Activated B cell treated with CpG ODN at 0.5 μM for 24 hours (primary cell): ENCODE measurements at regions of chr9 and their contacts with region 1.

Region 1: DNA sequence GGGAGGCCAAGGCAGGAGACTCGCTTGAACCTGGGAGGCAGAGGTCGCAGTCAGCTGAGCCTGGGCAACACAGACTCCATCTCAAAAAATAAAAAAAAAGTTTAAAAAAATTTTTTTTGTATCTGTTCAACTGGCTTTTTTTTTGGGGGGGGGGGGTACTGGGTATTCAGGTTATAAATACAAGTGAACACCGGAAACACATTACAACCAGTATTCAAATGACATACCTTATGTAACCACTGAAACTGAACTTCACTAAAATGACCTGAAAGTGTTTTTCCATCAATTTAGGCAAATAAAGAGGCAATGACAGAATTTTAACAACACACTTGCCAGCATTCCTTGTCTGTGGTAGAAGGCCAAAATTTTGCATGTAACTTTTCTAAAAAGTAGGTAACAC is 33.5 kb downstream of the STRBP start:
- DNase-seq: no peak
- ATAC-seq: peak; percentile 42
- H3K4me3 Mint-ChIP-seq: peak overlapping the region; percentile 69
- H3K27ac Mint-ChIP-seq: peak overlapping the region; percentile 94
- H3K4me1 Mint-ChIP-seq: peaks cover 49% of the 10 kb centered on the region
- H3K27me3 Mint-ChIP-seq: no peaks in the 10 kb centered on the region
- CTCF ChIP-seq: no peak

Region 2: GRCh38 chr9:123206064-123206463 is 28.8 kb before region 1 on chr9:
- CTCF ChIA-PET with region 1: no interaction called
- POLR2A ChIA-PET with region 1: no interaction called
- intact Hi-C with region 1: no loop called
- DNase-seq: no peak
- ATAC-seq: no peak
- H3K4me3 Mint-ChIP-seq: no peak overlapping the region
- H3K27ac Mint-ChIP-seq: no peak overlapping the region
- H3K4me1 Mint-ChIP-seq: peaks cover 59% of the 10 kb centered on the region
- H3K27me3 Mint-ChIP-seq: no peaks in the 10 kb centered on the region
- CTCF ChIP-seq: no peak

Region 3: GRCh38 chr9:123217148-123217585 is 17.7 kb before region 1 on chr9:
- CTCF ChIA-PET with region 1: no interaction called
- POLR2A ChIA-PET with region 1: interaction called, 4 read pairs
- intact Hi-C with region 1: loop called (anchors 2 kb)
- DNase-seq: no peak
- ATAC-seq: no peak
- H3K4me3 Mint-ChIP-seq: peak overlapping the region; percentile 21
- H3K27ac Mint-ChIP-seq: peak overlapping the region; percentile 64
- H3K4me1 Mint-ChIP-seq: peaks cover 71% of the 10 kb centered on the region
- H3K27me3 Mint-ChIP-seq: no peaks in the 10 kb centered on the region
- CTCF ChIP-seq: no peak

Region 4: GRCh38 chr9:123246534-123246933 is 11.7 kb after region 1 on chr9:
- CTCF ChIA-PET with region 1: no interaction called
- POLR2A ChIA-PET with region 1: interaction called, 9 read pairs
- intact Hi-C with region 1: loop called (anchors 1 kb)
- DNase-seq: no peak
- ATAC-seq: no peak
- H3K4me3 Mint-ChIP-seq: no peak overlapping the region
- H3K27ac Mint-ChIP-seq: peak overlapping the region; percentile 25
- H3K4me1 Mint-ChIP-seq: peaks cover 82% of the 10 kb centered on the region
- H3K27me3 Mint-ChIP-seq: no peaks in the 10 kb centered on the region
- CTCF ChIP-seq: no peak

Region 5: GRCh38 chr9:123251741-123252140 is 16.9 kb after region 1 on chr9:
- CTCF ChIA-PET with region 1: no interaction called
- POLR2A ChIA-PET with region 1: interaction called, 9 read pairs
- intact Hi-C with region 1: loop called (anchors 2 kb)
- DNase-seq: no peak
- ATAC-seq: no peak
- H3K4me3 Mint-ChIP-seq: no peak overlapping the region
- H3K27ac Mint-ChIP-seq: peak overlapping the region; percentile 62
- H3K4me1 Mint-ChIP-seq: peaks cover 82% of the 10 kb centered on the region
- H3K27me3 Mint-ChIP-seq: no peaks in the 10 kb centered on the region
- CTCF ChIP-seq: no peak

Region 6: GRCh38 chr9:123637945-123638634 is 403.2 kb after region 1 on chr9:
- CTCF ChIA-PET with region 1: no interaction called
- POLR2A ChIA-PET with region 1: no interaction called
- intact Hi-C with region 1: no loop called
- DNase-seq: no peak
- ATAC-seq: peak; percentile 31
- H3K4me3 Mint-ChIP-seq: peak overlapping the region; percentile 82
- H3K27ac Mint-ChIP-seq: peak overlapping the region; percentile 57
- H3K4me1 Mint-ChIP-seq: peaks cover 17% of the 10 kb centered on the region
- H3K27me3 Mint-ChIP-seq: no peaks in the 10 kb centered on the region
- CTCF ChIP-seq: no peak